ENCODE measurements at regions of chr3 and their contacts with region 1.

Region 1: DNA sequence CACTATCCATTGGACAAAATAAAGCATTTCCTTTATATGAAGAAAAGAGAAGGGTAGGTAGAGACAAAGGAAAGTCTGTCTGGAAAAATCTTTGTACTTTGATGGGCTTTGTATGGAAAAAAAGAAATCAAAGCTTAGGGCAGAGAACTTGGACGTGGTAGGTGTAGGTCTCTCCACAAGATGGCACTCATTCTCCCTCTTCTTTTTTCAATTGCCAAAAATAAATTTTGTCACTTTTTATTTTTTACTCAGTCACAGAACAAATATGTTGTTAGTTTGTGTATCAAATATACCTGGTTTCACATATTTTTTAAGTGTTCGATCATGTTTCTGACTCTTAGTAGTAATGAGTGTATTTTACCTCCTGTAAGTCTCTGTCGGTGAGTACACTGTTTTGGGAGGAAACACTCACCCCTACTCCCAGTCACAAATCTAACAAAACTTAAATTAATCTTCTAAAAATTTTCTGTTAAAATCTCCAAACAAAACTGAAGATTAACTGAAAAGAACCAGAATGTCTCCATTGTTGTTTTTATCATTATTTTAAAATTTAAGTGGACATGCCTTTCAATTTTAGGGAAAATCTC is 415.8 kb upstream of the GOLIM4 start:
- H3K4me3 ChIP-seq: no peak overlapping the region
- H3K27ac ChIP-seq: no peak overlapping the region
- H3K4me1 ChIP-seq: no peaks in the 10 kb centered on the region
- CTCF ChIP-seq: no peak

Region 2: DNA sequence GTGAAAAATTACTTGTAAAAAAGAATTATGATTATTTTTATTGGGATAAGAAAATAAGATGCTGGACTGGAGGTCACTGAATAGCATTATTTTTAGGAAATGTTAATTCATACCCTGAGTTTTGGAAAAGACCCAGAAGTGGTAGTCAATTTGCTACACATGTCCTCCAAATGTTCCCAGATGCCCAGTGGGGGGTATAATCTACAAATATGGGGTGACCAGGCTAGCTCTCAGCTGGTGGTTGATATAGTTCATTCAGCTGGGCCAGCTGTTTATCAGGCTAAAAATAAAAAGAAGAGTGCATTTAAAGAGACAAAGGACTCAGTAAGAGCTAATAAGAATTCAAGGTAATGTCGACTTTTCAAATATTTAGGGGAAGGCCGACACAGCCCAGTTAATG is 13.8 kb before region 1 on chr3:
- CTCF ChIA-PET with region 1: no interaction called
- POLR2A ChIA-PET with region 1: no interaction called
- H3K4me3 ChIP-seq: no peak overlapping the region
- H3K27ac ChIP-seq: no peak overlapping the region
- H3K4me1 ChIP-seq: no peaks in the 10 kb centered on the region
- CTCF ChIP-seq: no peak

Region 3: GRCh38 chr3:168620826-168621225 is 109.3 kb after region 1 on chr3:
- CTCF ChIA-PET with region 1: interaction called, 14 read pairs
- POLR2A ChIA-PET with region 1: no interaction called
- H3K4me3 ChIP-seq: no peak overlapping the region
- H3K27ac ChIP-seq: no peak overlapping the region
- H3K4me1 ChIP-seq: no peaks in the 10 kb centered on the region; the same call in 1 of the 2 replicates
- CTCF ChIP-seq: no peak

Region 4: GRCh38 chr3:168847291-168847883 is 335.9 kb after region 1 on chr3:
- CTCF ChIA-PET with region 1: interaction called, 12 read pairs
- POLR2A ChIA-PET with region 1: no interaction called
- H3K4me3 ChIP-seq: no peak overlapping the region
- H3K27ac ChIP-seq: no peak overlapping the region
- H3K4me1 ChIP-seq: no peaks in the 10 kb centered on the region
- CTCF ChIP-seq: no peak

Measured in HEK293 (cell line).